Right cardiac atrium (tissue), 5 donors: ENCODE measurements at regions of chr21 and their contacts with region 1.

Region 1: DNA sequence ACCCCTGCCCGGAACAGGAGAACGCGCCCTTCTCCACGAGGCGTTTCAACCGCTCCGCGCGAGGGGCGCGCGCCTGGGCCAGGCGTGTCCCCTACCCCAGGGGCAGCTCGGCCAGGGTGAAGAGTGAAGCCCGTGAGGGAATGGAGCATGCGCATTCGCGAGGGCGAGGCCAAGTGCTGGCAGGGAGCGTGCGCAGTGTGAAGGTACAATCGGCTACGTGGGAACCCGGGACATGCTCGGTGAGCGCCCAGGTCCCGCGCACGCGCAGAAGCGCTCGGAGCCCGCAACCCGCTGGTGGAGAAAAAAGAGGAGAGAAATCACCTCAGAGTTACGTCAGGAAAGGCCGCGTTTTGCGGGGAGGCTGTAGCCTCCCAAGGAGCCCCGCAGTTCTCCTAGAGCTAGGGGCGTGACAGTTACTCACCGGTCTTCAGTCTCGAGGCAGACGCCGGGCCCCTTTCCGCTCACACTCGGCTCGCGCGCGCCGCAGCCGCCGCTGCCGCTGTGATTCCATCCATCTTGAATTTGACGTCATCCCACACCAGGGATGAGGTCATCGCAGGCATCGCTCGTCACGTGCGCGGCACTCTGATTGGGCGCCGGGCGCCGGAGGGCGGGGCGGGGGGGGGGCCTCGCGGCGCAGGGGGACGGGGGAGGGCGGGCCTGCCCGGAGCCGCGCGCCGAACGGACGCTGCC is at the start of gene ZBTB21:
- DNase-seq: peak; percentile 99 to 100 (median 99)
- ATAC-seq: peak; percentile 98 to 99
- H3K4me3 ChIP-seq: peak within 1 kb of the TSS; percentile 53
- H3K27ac ChIP-seq: peak within 1 kb of the TSS; percentile 96
- H3K4me1 ChIP-seq: no peaks in the 10 kb centered on the region
- H3K27me3 ChIP-seq: no peaks in the 10 kb centered on the region
- total RNA-seq, gene ZBTB21: 6.8 to 15.2 (median 8.9) TPM

Region 2: GRCh38 chr21:41879190-41879998 is 130.6 kb before region 1 on chr21 and contains the start of gene PRDM15:
- intact Hi-C with region 1: loop called in 1 of 4 experiments (anchors 10 kb)
- DNase-seq: peak; percentile 88 to 94 (median 94)
- ATAC-seq: peak; percentile 63 to 70
- H3K4me3 ChIP-seq: peak within 1 kb of the TSS; percentile 100
- H3K27ac ChIP-seq: peak within 1 kb of the TSS; percentile 80
- H3K4me1 ChIP-seq: no peaks in the 10 kb centered on the region
- H3K27me3 ChIP-seq: no peaks in the 10 kb centered on the region
- total RNA-seq, gene PRDM15: 3.1 to 6.0 (median 4.0) TPM

Region 3: DNA sequence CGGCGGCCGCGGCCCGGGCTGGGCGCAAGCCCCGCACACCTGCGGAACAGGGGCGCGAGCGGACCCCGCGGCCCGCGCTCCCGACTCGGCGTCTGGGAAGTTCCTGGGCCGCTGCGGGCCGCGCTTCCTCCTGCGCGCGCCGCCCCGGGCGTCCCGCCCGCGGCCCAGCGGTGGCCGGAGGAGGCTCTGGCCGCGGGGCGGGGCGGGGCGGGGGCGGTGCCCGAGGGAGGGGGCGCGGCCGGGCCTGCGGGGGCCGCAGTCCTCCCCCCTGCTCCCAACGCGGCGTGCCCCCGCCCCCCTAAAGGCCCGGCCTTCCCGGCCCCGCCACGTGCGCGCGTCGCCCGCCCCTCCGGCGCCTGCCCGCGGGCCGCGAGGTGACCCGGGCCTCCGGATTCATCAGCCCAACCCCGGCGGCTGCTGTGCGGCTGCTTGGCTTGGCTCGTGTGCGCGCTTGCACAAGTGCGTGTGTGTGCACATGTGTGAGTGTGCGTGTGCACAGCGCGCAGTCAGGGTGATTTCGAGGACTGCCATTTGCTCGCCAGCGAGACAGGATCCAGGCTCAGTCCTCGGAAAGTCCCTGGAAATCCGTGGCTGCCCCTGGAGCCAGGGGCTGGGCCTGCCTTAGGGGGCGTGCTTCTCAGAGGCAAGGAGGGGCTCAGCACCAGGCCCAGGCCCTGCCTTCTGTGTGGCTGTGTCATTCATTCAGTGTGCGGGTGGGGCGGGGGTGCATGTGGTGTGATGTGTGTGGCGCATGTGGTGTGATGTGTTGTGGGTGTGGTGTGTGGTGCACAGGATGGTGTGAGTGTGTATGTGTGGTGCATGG is 55.9 kb before region 1 on chr21 and contains the start of gene C2CD2:
- intact Hi-C with region 1: loop called in 3 of 4 experiments (anchors 10 kb)
- DNase-seq: peak; percentile 81 to 92 (median 88)
- ATAC-seq: peak; percentile 83 to 88
- H3K4me3 ChIP-seq: peak within 1 kb of the TSS; percentile 86
- H3K27ac ChIP-seq: peak within 1 kb of the TSS; percentile 26
- H3K4me1 ChIP-seq: peaks cover 8% of the 10 kb centered on the region
- H3K27me3 ChIP-seq: no peaks in the 10 kb centered on the region
- total RNA-seq, gene C2CD2: 8.0 to 10.0 (median 8.4) TPM

Region 4: DNA sequence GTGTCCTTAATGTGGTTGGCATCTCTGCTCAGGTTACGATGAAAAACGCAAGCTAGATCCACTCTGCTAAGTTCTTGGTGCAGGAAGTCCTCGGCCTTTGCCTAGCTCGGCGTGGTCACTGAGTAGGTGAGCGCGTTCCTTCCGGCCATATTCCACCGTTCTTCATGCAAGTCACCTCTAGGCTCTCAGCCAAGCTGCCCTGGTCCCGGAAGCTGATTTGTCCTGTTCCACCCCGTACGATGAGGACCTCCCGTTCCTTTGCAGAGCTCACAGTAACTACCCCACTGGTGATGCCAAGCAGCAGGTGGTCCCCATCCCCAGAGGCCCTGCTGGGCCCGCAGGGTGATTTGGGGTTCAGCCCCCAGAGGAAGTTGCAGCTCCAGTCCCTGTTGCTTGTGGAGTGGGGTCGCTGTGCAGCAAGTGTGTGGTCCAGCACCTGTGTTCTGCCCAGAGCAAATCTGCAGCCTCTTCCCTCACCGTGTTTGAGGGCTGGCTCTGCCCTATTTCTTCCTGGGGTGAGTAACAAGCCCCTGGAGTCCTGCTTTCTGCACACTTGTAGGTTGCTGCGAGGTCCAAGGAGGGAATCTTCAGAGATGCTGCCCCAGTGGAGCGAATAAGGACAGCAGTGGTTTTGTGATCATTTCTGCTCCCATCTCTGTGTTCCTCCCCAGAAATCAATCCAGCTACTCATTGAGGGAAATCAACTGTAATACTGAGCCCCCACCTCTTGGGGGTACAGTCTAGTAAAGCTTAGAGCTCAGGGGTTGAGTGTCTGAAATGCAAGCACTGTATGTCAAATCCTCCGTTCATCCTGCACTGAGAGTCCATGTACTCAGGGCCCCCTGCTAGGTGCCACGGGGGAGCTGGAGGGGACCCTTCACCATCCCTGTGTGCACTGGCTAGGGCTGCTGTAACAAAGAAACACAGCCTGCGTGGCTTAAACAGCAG is 63.4 kb after region 1 on chr21:
- intact Hi-C with region 1: no loop called
- DNase-seq: peak in 2 of 3 donors; percentile 2 to 14
- ATAC-seq: peak in 1 of 2 donors; percentile 11
- H3K4me3 ChIP-seq: no peak overlapping the region
- H3K27ac ChIP-seq: no peak overlapping the region
- H3K4me1 ChIP-seq: no peaks in the 10 kb centered on the region
- H3K27me3 ChIP-seq: no peaks in the 10 kb centered on the region